Naive thymus-derived CD8-positive, alpha-beta T cell (primary cell): ENCODE measurements at regions of chr4 and their contacts with region 1.

Region 1: DNA sequence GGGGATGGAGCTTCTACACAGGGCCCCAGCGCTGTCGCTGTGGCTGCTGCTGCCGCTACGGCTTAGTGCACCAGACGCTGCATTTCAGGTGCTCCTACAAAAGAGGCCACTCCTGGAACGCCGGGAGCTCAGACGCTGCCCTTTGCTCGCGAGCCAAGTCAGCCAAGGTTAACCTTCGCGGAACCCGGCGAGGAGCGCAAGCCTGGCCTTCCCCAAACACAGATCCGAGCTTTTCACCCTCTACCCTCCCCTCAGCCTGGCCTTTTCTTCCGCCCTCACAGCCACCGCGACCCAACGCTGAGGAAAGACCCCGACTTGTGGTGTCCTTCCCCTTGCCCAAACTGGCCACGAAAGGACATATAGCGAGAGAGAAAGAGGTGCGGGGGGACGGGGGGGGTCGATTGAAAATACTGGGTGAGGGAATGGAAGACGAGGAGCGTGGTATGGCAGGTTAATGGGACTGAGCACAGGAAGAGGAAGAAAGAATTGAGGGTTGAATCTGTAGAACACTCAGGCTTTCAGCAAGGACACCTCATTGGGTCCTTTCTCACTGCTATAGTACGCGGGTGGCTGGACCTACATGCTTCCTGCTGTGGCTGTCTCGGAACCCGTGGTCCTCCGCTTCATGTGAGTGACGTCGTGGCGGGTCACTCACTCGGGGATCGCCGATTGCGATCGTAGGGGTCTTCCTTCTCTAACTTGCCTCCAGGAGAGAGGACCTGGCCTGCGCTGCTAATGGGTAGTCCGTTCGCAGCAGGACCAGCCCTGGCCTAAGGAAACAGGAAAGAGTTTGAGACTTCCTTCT is at the starts of genes AIMP1 and TBCK:
- DNase-seq: peak; percentile 71 to 96 (median 91)
- ATAC-seq: peak; percentile 85 to 86
- H3K4me3 Mint-ChIP-seq: peak within 1 kb of the TSS in 1 of 10 donors; percentile 89
- H3K27ac Mint-ChIP-seq: no peak within 1 kb of the TSS
- H3K4me1 Mint-ChIP-seq: peaks cover 14 to 41% (median 31%) of the 10 kb centered on the region in 4 donors
- H3K27me3 Mint-ChIP-seq: no peaks in the 10 kb centered on the region
- polyA plus RNA-seq, gene AIMP1: 64.6 to 95.5 (median 85.2) TPM
- polyA plus RNA-seq, gene TBCK: 20.7 to 32.5 (median 21.9) TPM

Region 2: DNA sequence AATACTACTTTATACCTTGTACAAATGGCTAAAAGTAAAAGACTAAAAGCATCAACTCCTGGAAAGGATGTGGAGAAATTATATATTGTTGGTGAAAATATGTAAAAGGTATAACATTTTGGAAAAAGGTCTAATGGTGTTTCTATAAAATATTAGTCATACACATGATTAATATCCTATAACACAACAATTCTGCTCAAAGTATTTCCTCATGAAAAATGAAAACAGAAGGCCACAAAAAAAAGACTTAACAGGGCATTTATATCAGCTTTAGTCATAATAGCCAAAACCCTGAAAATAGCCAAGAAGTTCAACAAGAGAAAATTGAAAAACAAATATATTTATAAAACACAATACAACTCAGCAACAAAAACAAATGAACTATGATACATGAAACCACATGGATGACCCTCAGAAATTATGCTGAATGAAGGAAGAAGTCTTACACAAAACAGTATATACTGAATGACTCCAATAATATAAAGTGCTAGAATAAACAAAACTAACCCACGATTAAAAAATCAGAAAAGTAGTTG is 39.0 kb before region 1 on chr4:
- POLR2A ChIA-PET with region 1: no interaction called
- DNase-seq: no peak
- ATAC-seq: no peak
- H3K4me3 Mint-ChIP-seq: no peak overlapping the region
- H3K27ac Mint-ChIP-seq: peak overlapping the region in 1 of 10 donors; percentile 32
- H3K4me1 Mint-ChIP-seq: peaks cover 4 to 14% (median 7%) of the 10 kb centered on the region in 4 donors
- H3K27me3 Mint-ChIP-seq: no peaks in the 10 kb centered on the region

Region 3: DNA sequence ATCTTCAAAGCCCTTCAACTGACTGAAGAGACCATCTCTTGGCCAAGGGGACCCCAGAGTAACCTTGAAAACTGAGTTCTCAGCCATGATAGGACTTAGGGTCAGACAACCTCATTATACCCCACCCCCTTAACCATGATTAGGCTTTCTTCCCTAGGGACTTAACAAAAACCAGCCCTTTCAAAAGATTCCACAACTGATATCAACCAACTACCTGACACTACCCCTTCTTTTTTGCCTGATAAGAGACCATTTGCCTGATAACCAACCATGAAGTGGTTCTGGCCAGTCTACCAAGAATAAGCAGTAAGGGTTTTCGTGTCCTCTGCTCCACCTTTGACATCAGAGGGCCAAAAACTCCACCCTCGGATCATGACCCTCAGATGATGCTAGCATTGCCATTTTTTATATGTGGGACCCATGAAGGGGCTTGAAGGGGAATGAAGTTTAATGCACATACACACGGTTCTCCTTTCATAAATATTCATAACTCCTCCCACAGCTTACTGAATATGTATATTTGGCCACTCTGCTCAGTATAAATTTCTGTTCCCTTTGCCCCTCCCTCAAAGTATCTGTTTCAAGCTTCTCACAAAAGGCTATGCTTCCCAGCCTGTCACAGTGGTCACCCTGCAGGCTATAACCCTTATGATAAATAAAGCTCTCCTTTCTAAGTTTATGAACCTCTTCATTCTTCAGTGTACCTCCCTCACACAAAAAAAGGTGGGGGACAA is 12.5 kb before region 1 on chr4:
- POLR2A ChIA-PET with region 1: interaction called, 14 read pairs
- DNase-seq: no peak
- ATAC-seq: no peak
- H3K4me3 Mint-ChIP-seq: no peak overlapping the region
- H3K27ac Mint-ChIP-seq: peak overlapping the region in 1 of 10 donors; percentile 24
- H3K4me1 Mint-ChIP-seq: peaks cover 19 to 46% (median 32%) of the 10 kb centered on the region in 4 donors
- H3K27me3 Mint-ChIP-seq: no peaks in the 10 kb centered on the region

Region 4: DNA sequence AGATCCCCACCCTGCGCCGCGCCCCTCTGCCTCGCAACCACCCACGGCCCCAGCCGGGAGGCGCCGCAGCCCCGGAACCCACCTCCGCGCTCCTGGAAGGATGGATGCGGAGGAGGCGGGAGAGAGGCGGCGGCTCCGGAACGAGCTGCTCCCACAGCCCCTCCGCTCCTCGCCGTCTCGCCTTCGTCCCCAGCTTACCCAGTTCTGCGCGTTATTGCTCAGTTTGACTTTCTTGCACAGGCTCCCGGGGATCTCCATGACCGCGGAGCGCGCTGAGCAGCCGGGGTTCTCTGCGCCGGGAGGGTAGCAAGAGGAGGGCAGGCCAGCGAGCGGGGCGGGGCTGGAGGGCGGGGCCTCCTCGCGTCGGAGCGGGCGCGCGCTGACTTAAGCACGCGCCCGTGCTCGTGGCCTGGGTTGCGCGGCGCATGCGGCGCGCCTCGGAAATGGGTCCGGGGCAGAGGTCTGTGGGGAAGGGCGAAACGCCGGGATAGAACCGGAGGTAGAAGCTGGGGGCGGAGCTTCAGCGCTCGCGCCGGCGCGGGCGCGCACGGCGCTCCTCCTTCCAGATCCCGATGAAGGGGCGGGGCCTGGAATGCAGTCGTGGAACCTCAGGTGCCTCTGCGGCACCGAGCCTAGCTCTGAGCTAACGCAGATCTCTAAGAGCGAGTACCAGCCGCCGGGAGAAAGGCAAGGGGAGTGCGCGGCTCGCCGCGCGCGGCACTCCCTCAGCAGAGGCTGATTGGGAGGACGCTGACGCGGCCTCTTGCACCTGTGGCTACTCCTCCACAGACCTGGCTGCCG is 1404.0 kb after region 1 on chr4 and contains the start of gene PAPSS1:
- POLR2A ChIA-PET with region 1: interaction called, 14 read pairs
- DNase-seq: peak; percentile 89 to 97 (median 95)
- ATAC-seq: peak; percentile 85
- H3K4me3 Mint-ChIP-seq: peak within 1 kb of the TSS; percentile 93 to 98 (median 95)
- H3K27ac Mint-ChIP-seq: peak within 1 kb of the TSS; percentile 87 to 98 (median 95)
- H3K4me1 Mint-ChIP-seq: peaks cover 22 to 32% (median 30%) of the 10 kb centered on the region in 4 donors
- H3K27me3 Mint-ChIP-seq: no peaks in the 10 kb centered on the region
- polyA plus RNA-seq, gene PAPSS1: 22.8 to 23.9 (median 23.2) TPM